ENCODE measurements at regions of chr6 and their contacts with region 1.

Region 1: DNA sequence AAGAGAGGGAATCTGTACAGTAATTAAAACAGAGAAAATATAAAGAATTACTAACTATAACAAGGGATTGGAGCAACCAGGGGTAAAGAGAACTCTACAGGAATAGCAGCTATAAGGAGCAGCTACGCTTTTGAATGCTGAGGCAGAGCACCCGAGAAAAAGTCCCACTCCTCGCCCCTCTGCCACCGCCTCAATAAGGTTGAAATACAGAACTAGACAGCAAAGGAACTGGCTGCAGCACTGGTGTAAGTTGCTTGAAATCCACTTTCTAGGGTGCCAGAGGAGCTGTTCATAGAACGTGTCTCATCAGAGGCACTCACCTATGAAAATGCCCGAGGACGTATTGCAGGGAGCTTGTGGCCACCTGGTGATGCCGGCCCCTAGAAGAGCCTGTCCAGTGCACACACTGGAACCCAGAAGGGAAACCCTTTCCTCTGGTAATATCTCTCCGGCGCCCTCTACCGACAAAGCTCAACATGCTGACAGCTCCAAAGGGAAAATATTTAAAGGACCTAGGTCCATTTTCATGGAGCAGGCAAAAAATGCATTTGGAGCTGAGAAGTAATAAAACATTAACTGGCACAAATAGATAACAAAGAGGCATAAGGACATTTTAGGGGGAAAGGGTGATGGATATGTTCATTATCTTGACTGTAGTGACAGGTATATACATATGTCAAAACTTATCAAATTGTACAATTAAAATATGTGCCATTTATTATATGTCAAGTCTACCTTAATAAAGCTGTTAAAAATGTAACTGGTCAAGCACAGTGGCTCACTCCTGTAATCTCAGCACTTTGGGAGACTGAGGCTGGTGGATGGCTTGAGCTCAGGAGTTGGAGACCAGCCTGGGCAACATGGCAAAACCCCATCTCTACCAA is 137.4 kb upstream of the HDAC2 start:
- DNase-seq: peak; percentile 34
- H3K4me3 ChIP-seq: no peak overlapping the region
- H3K27ac ChIP-seq: no peak overlapping the region
- H3K27me3 ChIP-seq: no peaks in the 10 kb centered on the region
- CTCF ChIP-seq: peak; percentile 88

Region 2: DNA sequence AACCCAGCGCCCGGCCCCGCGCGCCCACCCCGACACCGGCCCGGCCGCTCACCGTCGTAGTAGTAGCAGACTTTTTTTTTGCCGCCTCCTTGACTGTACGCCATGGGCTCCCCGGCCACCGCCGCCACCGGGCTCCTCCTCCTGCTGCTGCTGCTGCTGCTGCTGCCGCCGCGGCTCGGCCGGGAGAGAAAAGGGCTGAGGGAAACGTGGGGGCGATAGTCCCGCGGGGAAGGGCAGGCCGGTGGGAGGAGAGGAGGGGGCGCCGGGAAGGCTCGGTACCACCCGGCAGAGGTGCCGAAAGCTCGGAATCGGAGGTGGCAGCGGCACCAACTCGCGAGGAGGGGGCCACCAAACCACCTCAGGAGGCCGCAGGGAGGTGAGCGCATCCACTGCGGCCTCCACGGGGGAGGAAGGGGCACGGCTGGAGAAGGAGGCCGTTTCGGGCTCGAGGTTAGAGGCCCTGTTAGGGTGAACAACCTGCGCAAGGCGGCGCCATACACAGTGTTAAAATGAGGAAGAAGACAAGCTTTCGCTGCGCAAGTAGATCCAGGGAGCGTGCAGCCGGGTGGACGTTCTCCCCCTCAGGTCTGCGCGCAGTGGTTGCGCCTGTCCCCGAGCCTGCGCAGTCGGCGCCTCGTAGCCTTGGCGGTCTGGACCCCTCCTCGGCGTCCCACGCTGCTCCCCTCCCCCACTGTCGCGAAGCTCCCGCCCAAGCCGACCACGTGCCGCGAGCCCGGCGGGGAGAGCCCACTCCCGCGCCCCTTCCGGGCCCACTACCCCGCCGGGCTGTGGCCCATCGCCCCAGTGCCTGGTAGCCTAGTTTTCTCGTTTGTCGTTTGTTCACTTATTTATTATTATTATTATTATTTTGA is 137.3 kb before region 1 on chr6 and contains the start of gene HDAC2:
- CTCF ChIA-PET with region 1: interaction called, 11 read pairs
- POLR2A ChIA-PET with region 1: no interaction called
- DNase-seq: peak; percentile 37
- H3K4me3 ChIP-seq: peak within 1 kb of the TSS; percentile 90
- H3K27ac ChIP-seq: peak within 1 kb of the TSS; percentile 85
- H3K27me3 ChIP-seq: no peaks in the 10 kb centered on the region
- CTCF ChIP-seq: no peak
- polyA plus RNA-seq, gene HDAC2: 171 and 242 TPM in 2 replicates

Region 3: DNA sequence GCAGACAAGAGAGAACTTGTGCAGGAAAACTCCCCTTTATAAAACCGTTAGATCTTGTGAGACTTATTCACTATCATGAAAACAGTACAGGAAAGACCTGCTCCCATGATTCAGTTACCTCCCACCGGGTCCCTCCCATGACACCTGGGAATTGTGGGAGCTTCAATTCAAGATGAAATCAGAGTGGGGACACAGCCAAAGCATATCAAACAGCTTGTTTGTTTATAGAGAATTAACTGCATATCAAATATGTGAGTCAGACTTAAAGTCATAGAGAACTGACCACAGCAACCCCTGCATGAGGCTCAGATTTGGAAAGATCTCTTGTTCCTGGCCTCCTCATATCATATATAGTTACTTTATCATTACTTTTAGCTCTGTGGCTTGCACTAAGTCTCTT is 108.3 kb before region 1 on chr6:
- CTCF ChIA-PET with region 1: interaction called, 232 read pairs
- POLR2A ChIA-PET with region 1: interaction called, 5 read pairs
- DNase-seq: peak; percentile 34
- H3K4me3 ChIP-seq: no peak overlapping the region
- H3K27ac ChIP-seq: peak overlapping the region; percentile 11
- H3K27me3 ChIP-seq: no peaks in the 10 kb centered on the region
- CTCF ChIP-seq: no peak

Region 4: GRCh38 chr6:114049367-114049997 is 58.9 kb before region 1 on chr6:
- CTCF ChIA-PET with region 1: interaction called, 14 read pairs
- POLR2A ChIA-PET with region 1: no interaction called
- DNase-seq: no peak
- H3K4me3 ChIP-seq: no peak overlapping the region
- H3K27ac ChIP-seq: no peak overlapping the region
- H3K27me3 ChIP-seq: no peaks in the 10 kb centered on the region
- CTCF ChIP-seq: no peak

Region 5: DNA sequence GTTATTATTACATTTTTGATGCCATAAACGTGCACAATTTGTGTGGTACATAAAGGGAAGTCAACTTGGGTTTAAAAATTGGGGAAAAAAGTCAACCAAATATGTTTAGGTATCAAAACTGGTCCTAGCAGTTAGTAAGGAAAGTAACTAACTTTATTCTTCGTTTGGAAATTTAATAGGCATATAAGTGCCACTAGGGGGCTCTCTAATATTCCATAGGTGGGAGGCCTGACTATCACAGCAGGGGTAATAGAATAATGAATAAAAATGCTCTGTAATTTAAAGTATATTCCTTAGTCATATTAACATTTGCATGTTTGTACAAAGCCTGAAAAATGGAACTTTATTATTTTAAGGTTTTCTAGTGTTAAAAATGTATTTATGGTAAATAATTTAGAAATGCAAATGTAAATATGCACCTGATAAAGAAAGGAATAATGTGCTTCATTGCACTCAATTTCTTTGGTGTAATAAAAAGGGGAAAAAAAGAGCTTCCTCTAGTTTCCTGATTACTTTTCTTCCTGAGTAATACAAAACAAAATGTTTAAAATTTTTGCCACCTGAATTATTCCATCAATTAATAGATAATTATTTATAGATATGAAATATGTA is 11.7 kb before region 1 on chr6:
- CTCF ChIA-PET with region 1: interaction called, 65 read pairs
- POLR2A ChIA-PET with region 1: no interaction called
- DNase-seq: no peak
- H3K4me3 ChIP-seq: no peak overlapping the region
- H3K27ac ChIP-seq: no peak overlapping the region
- H3K27me3 ChIP-seq: no peaks in the 10 kb centered on the region
- CTCF ChIP-seq: peak; percentile 79

Region 6: DNA sequence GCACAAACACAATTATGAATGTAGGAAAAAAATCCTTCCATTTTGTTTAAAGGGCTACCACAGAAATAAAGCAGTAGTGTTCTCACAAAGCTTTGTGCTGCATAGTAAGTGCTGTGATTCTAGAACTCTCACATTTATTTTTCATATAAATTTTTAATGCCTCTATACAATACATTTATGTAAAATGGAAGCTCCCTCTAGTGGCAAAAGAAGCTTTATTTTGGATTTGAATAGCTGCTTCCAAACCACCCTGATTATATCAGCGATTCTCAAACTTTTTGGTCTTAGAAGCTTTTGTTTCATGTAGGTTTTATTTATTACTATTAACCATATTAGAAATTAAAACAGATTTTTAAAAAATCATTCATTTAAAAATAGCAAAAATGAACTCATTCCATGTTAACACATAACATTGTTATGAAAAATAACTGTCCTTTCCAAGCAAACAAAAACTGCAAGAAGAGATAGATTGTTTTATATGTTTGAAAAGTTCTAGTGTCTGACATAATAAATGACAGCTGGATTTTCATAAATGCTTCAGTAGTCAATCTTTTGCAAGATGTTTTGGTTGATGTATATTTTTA is 196.0 kb after region 1 on chr6:
- CTCF ChIA-PET with region 1: interaction called, 17 read pairs
- POLR2A ChIA-PET with region 1: no interaction called
- DNase-seq: peak; percentile 7
- H3K4me3 ChIP-seq: no peak overlapping the region
- H3K27ac ChIP-seq: no peak overlapping the region
- H3K27me3 ChIP-seq: no peaks in the 10 kb centered on the region
- CTCF ChIP-seq: peak; percentile 61

Measured in AG04450 (cell line).